ENCODE measurements at regions of chr19 and their contacts with region 1.

Region 1: DNA sequence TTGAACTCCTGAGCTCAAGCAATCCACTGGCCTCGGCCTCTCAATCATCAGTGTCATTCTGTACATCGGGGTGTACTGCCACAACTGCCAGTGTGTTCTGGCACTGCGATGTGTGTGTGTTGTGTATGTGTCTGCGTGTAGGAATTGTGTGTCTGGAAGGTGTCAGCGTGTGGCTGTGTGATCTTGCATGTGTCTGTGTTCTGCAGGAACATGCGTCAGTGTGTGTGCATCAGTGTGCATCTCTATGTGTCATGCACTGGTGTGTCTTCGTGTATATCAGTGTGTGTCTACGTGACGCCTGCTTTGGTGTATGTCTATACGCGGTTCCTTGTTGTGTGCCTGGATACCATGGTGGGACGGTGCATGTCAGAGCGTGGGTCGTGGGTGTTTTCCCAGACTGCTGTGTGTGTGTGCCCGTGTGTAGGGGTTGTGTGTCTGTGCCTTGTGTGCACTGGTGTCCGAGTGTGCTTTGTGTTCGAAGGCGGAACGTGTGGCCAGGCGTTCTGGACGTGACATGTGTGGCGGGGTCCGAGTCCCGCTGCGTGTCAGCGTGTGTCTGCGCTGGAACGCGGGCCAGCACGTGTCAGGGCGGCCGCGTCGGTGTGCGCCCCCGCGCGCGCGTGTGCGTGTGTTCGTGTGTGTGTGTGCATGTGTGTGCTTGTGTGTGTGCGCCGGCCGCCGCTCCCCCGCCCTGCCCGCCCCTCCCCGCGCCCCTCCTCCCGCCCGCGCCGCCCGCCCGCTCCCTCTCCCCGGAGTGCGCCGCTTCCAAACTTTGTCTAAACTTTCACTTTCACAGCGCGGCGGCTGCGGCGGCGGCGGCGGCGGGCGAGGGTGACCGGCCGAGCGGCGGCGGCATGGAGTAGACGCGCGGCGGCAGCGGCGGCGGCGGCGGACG is at the start of gene NFIX:
- DNase-seq: no peak
- H3K4me3 ChIP-seq: peak within 1 kb of the TSS; percentile 87 to 90
- H3K27ac ChIP-seq: peak within 1 kb of the TSS; percentile 99
- H3K4me1 ChIP-seq: peaks cover 33% of the 10 kb centered on the region
- H3K27me3 ChIP-seq: no peaks in the 10 kb centered on the region
- CTCF ChIP-seq: no peak
- POLR2A ChIP-seq: peak in 1 of 2 donors; percentile 29
- total RNA-seq, gene NFIX: 81.8 TPM

Region 2: DNA sequence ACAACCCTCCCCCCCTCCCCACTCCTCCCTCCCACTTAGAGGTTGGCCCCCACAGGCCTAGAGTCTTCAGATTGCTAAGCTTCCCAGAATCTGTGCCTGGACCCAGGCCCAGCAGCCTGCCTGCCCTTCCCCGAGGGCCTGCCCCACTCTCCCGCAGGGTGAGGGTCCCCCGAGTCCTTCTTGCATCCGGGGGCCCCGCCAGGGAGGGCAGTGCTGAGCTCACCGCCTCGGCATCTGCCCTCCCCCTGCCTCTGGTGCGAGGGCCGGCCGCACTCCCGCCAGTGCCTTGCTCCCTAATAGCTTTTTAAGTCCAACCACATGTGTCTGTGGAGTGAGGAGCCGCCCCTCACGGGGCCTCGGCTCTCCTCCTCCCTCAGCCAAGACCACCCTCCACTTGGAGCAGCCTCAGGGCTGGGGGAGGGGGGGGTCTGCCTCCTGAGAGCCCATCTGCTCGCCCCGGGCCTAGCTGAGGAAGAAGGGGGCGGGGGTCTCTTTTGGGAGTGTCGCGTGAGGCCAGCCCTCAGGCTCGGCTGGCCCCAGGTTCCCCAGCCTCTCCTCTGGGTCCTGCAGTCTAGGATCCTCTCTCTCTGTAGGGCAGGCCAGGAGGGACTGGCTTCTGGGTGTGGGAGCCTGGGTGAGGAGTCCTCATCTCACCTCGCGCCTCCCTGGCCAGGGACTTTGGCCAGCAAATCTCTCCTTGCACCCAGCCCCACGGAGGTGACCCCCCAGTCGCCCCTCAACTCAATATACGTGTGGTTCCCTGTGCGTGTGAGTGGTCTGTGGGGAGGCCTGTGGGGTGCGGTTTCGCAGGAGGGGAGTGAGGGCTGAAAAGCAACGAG is 60.5 kb after region 1 on chr19:
- intact Hi-C with region 1: loop called (anchors 5 kb)
- DNase-seq: no peak
- H3K4me3 ChIP-seq: peak overlapping the region; percentile 15 to 30
- H3K27ac ChIP-seq: peak overlapping the region; percentile 96
- H3K4me1 ChIP-seq: peaks cover 100% of the 10 kb centered on the region
- H3K27me3 ChIP-seq: no peaks in the 10 kb centered on the region
- CTCF ChIP-seq: no peak
- POLR2A ChIP-seq: peak in 1 of 2 donors; percentile 45

Region 3: GRCh38 chr19:13082192-13083007 is 87.5 kb after region 1 on chr19:
- intact Hi-C with region 1: loop called (anchors 5 kb)
- DNase-seq: no peak
- H3K4me3 ChIP-seq: no peak overlapping the region
- H3K27ac ChIP-seq: peak overlapping the region; percentile 78
- H3K4me1 ChIP-seq: peaks cover 61% of the 10 kb centered on the region
- H3K27me3 ChIP-seq: no peaks in the 10 kb centered on the region
- CTCF ChIP-seq: no peak
- POLR2A ChIP-seq: no peak